ENCODE measurements at regions of chr2 and their contacts with region 1.

Region 1: GRCh38 chr2:36355151-36355889 is at the start of gene CRIM1:
- DNase-seq: peak; percentile 88
- H3K4me3 ChIP-seq: peak within 1 kb of the TSS; percentile 85 to 98 (median 87)
- H3K27ac ChIP-seq: peak within 1 kb of the TSS; percentile 75
- H3K4me1 ChIP-seq: peaks cover 42% of the 10 kb centered on the region
- H3K27me3 ChIP-seq: no peaks in the 10 kb centered on the region
- CTCF ChIP-seq: no peak
- POLR2A ChIP-seq: peak; percentile 98
- total RNA-seq, gene CRIM1: 649 and 675 TPM in 2 replicates

Region 2: DNA sequence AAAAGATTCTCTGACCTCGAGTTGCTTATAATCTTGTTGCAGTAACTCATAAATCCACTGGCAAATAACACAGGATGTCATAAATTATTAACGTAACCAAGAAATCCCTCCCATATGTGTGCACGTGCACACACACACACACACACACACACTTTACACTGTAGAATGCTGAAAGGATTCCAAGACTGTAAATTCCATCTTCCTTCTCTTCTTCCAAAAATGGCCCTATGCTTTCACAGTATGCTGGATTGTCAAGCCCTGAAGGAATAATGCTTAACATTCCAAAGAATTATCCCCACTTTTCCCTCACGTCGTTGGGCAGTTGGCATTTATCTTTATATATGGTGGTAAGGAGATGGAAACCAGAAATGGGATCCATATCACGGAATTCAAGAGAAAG is 117.2 kb before region 1 on chr2:
- CTCF ChIA-PET with region 1: no interaction called
- POLR2A ChIA-PET with region 1: no interaction called
- dilution Hi-C with region 1: no loop called
- intact Hi-C with region 1: no loop called
- DNase-seq: no peak
- H3K4me3 ChIP-seq: no peak overlapping the region
- H3K27ac ChIP-seq: no peak overlapping the region
- H3K4me1 ChIP-seq: no peaks in the 10 kb centered on the region
- H3K27me3 ChIP-seq: peaks cover 0 to 5% of the 10 kb centered on the region in 2 experiments
- CTCF ChIP-seq: no peak
- POLR2A ChIP-seq: no peak

Region 3: GRCh38 chr2:36367895-36368353 is 12.6 kb after region 1 on chr2:
- CTCF ChIA-PET with region 1: interaction called, 20 read pairs
- POLR2A ChIA-PET with region 1: interaction called, 17 read pairs
- dilution Hi-C with region 1: no loop called
- intact Hi-C with region 1: loop called (anchors 1 kb)
- DNase-seq: peak; percentile 45
- H3K4me3 ChIP-seq: peak overlapping the region in 1 of 3 experiments; percentile 1
- H3K27ac ChIP-seq: peak overlapping the region; percentile 31
- H3K4me1 ChIP-seq: peaks cover 98% of the 10 kb centered on the region
- H3K27me3 ChIP-seq: no peaks in the 10 kb centered on the region
- CTCF ChIP-seq: no peak
- POLR2A ChIP-seq: no peak

Region 4: DNA sequence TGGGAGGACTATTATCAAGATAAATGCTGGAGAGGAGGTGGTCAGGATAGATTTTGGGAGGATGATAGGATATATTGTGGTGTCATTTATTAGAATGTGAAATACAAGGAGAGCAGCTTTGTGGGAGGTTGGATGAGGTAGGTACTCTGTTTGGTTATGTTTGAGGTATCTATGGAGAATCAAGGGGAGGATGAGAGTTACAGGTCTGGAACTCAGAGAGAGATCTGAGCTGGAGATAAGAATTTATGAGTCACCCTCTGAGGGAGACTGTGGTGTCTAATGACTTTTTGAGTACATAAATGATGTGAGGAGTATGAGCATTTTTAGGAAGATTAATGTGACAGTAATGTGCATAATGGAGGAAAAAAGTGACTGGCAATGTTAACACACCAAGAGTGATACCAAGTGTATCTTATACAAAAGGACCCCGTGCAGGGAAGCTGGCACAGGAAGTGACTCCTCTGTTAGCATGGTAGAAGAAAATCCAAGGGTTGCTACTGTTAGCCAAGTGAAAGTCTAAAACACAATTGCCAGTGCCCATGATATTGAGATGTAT is 48.4 kb after region 1 on chr2:
- CTCF ChIA-PET with region 1: interaction called, 6 read pairs
- POLR2A ChIA-PET with region 1: interaction called, 3 read pairs
- dilution Hi-C with region 1: no loop called
- intact Hi-C with region 1: loop called (anchors 1 kb)
- DNase-seq: peak; percentile 79
- H3K4me3 ChIP-seq: no peak overlapping the region
- H3K27ac ChIP-seq: peak overlapping the region; percentile 92
- H3K4me1 ChIP-seq: peaks cover 96% of the 10 kb centered on the region
- H3K27me3 ChIP-seq: no peaks in the 10 kb centered on the region
- CTCF ChIP-seq: no peak
- POLR2A ChIP-seq: peak; percentile 64

Region 5: DNA sequence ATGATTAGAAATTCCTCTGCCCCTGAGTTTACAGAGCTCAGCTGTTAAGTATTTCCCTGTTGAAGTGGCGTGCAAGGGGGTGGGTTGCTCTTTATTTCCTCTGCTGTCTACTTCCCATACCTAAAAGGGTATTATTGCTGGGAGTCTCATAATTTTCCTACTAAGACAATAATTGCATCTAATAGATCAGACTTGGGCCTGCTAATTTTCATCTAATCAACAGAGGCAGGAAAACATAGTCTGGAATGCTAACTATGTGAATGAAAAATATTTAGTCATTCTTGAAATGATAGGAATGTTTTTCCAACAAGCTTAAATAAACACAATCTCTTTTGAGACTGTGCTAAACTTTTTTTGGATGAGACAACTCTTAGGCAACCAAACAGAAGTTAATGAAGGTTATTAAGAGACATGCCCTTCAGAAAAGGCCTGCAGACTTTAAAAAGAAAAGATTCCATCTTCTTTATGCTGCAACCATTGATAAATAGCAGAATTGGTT is 131.3 kb after region 1 on chr2:
- CTCF ChIA-PET with region 1: interaction called, 6 read pairs
- POLR2A ChIA-PET with region 1: interaction called, 4 read pairs
- dilution Hi-C with region 1: no loop called
- intact Hi-C with region 1: loop called (anchors 1 kb)
- DNase-seq: peak; percentile 90
- H3K4me3 ChIP-seq: no peak overlapping the region
- H3K27ac ChIP-seq: peak overlapping the region; percentile 93
- H3K4me1 ChIP-seq: peaks cover 93% of the 10 kb centered on the region
- H3K27me3 ChIP-seq: no peaks in the 10 kb centered on the region
- CTCF ChIP-seq: no peak
- POLR2A ChIP-seq: peak; percentile 43

Region 6: DNA sequence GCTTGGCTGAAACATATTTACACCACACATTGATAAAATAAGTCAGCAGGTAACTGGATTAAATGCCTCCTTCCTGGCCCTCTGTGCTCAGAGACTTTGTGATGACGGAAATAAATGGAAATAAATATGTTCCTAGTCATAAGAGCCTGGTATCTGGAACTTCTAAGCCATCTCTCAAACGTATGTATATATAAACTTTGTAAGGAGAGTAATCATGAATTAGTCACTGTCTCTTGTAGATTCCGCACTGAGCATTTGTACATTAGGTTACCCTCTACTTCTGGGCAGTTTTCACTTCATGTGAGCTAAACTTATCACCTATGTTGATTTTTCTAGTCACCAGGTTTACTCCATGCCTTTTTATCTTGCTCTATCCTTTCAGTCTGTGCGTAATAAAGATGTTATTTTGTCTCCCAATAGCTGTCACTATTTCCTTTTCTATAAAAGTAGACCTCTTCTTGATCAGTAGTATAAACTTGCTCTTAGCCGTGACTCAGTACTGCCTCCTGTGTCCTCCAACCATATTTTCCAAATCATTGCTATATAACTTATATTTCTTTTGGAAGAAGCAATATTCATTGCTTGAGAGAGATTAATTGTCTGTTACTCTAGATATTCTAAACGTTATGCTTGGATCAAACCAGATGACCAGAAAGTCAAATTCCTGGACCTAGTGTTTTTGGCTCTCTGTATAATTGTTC is 189.5 kb after region 1 on chr2:
- CTCF ChIA-PET with region 1: interaction called, 5 read pairs
- POLR2A ChIA-PET with region 1: interaction called, 4 read pairs
- dilution Hi-C with region 1: no loop called
- intact Hi-C with region 1: loop called (anchors 5 kb)
- DNase-seq: no peak
- H3K4me3 ChIP-seq: no peak overlapping the region
- H3K27ac ChIP-seq: peak overlapping the region; percentile 5
- H3K4me1 ChIP-seq: peaks cover 91% of the 10 kb centered on the region
- H3K27me3 ChIP-seq: no peaks in the 10 kb centered on the region
- CTCF ChIP-seq: peak in 1 of 2 donors; percentile 19
- POLR2A ChIP-seq: peak; percentile 62

Region 7: GRCh38 chr2:36663851-36664695 is 308.8 kb after region 1 on chr2:
- CTCF ChIA-PET with region 1: interaction called, 24 read pairs
- POLR2A ChIA-PET with region 1: no interaction called
- dilution Hi-C with region 1: no loop called
- intact Hi-C with region 1: loop called (anchors 2 kb)
- DNase-seq: peak; percentile 82
- H3K4me3 ChIP-seq: no peak overlapping the region
- H3K27ac ChIP-seq: peak overlapping the region; percentile 15
- H3K4me1 ChIP-seq: peaks cover 14% of the 10 kb centered on the region
- H3K27me3 ChIP-seq: no peaks in the 10 kb centered on the region
- CTCF ChIP-seq: peak; percentile 53 to 67
- POLR2A ChIP-seq: no peak

Measured in endothelial cell of umbilical vein (primary cell).